Stomach (tissue), 19 donors: ENCODE measurements at regions of chr1 and their contacts with region 1.

Region 1: DNA sequence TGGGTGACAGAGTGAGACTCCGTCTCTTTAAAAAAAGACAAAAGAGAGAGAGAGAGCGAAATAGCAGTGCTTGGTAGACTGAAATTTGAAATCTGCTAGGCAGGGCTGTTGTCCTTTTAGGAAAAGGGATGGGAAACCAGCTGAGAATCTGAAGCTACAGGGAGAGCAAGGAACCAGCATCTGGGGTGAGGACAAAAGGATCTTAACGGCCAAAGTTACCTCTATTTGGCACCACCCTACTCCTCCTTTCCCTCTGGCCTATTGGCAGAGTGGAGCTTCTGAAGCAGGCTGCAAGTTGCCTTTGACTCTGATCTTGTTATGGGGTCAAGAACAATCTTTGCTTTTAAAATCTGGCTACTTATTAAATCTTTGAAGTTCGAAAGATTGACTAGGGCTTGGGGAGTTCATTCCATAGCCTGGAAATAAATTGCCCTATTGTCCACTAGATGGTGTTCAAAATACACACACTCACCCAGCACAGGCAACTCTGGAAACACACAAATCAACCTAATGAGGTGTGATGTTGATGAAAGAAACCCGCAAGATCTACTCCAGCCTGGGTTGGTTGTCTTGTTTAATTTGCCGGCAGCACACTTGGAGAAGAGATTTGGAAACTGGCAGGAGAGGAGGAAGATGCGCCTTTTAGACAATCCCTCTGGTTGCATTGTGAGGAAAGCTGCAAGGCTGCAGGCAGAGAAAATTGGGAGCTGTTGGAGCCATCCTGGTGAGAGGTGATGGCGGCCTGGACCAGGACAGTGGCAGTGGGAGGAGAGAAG is 16.5 kb upstream of the PARP1 start:
- DNase-seq: peak in 1 of 2 donors; percentile 73
- H3K4me3 ChIP-seq: no peak overlapping the region
- H3K27ac ChIP-seq: no peak overlapping the region
- H3K4me1 ChIP-seq: no peaks in the 10 kb centered on the region
- H3K27me3 ChIP-seq: peaks cover 0 to 10% (median 0%) of the 10 kb centered on the region in 3 donors
- CTCF ChIP-seq: peak in 5 of 7 experiments; percentile 50 to 72 (median 57)
- EP300 ChIP-seq: no peak
- POLR2A ChIP-seq: no peak

Region 2: DNA sequence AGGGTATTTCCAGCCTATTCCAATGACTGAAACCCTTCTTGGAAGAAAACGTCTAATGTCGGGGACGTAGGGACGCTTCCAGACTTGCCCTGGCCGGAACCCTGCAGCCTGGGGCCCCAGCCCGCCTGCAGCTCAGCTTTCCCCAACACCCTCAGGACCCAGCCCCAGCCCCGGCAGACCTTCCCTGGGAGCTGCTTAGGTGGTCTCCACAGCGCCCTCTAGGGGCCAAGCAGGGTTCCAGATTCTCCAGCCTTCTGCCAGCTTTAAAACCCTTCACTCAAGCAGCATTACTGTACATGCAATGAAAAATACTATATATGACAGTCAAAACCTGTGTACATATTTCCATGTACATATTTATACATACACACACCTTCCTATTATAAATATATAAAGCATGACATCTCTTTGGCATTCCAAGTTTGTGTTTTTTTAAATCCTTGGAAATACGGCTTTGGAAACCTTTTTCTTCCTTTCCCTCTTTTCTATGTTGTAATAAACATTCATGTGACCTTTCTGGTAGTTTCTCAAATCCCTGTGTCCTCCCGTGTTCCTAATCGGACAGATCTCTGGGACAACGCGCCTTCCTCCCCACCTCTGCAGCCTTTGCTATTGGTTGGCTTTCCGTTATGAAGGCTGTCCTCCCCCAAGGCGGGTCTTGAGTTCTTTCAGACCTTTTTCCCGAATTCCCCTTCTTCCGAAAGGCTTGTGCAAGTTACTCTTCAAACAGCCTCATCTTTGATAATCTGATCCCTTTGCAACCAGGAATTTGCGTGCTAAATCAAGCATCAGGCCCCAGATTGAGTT is 184.5 kb after region 1 on chr1:
- intact Hi-C with region 1: loop called (anchors 10 kb)
- DNase-seq: peak; percentile 72 to 91
- H3K4me3 ChIP-seq: no peak overlapping the region
- H3K27ac ChIP-seq: no peak overlapping the region
- H3K4me1 ChIP-seq: peaks cover 0 to 37% (median 19%) of the 10 kb centered on the region in 4 donors
- H3K27me3 ChIP-seq: no peaks in the 10 kb centered on the region
- CTCF ChIP-seq: peak in 5 of 7 experiments; percentile 36 to 85 (median 75)
- EP300 ChIP-seq: no peak
- POLR2A ChIP-seq: no peak